Stomach (tissue), 19 donors: ENCODE measurements at regions of chr11 and their contacts with region 1.

Region 1: GRCh38 chr11:76919887-76920746 is 59.4 kb downstream of the ACER3 start:
- DNase-seq: peak; percentile 83 to 94
- H3K4me3 ChIP-seq: peak overlapping the region in 1 of 4 donors; percentile 20
- H3K27ac ChIP-seq: peak overlapping the region; percentile 2 to 69 (median 54)
- H3K4me1 ChIP-seq: peaks cover 0 to 33% (median 20%) of the 10 kb centered on the region in 4 donors
- H3K27me3 ChIP-seq: no peaks in the 10 kb centered on the region
- CTCF ChIP-seq: peak in 5 of 7 experiments; percentile 71 to 92 (median 81)
- EP300 ChIP-seq: no peak
- POLR2A ChIP-seq: no peak

Region 2: GRCh38 chr11:76807206-76807875 is 112.8 kb before region 1 on chr11:
- intact Hi-C with region 1: loop called (anchors 5 kb)
- DNase-seq: peak; percentile 90 to 94
- H3K4me3 ChIP-seq: no peak overlapping the region
- H3K27ac ChIP-seq: no peak overlapping the region
- H3K4me1 ChIP-seq: peaks cover 12 to 38% (median 24%) of the 10 kb centered on the region in 4 donors
- H3K27me3 ChIP-seq: peaks cover 0 to 8% (median 0%) of the 10 kb centered on the region in 3 donors
- CTCF ChIP-seq: peak in 5 of 7 experiments; percentile 52 to 78 (median 73)
- EP300 ChIP-seq: no peak
- POLR2A ChIP-seq: no peak